ENCODE measurements at regions of chr1 and their contacts with region 1.

Region 1: GRCh38 chr1:48552420-48552819 is 80.4 kb upstream of the SPATA6 start:
- DNase-seq: peak in 1 of 2 donors; percentile 19
- ATAC-seq: peak; percentile 74
- H3K4me3 ChIP-seq: no peak overlapping the region
- H3K27ac ChIP-seq: peak overlapping the region in 2 of 4 donors; percentile 63 to 64
- H3K4me1 ChIP-seq: peaks cover 11 to 13% of the 10 kb centered on the region in 2 donors
- H3K27me3 ChIP-seq: no peaks in the 10 kb centered on the region
- CTCF ChIP-seq: peak; percentile 23 to 56 (median 43)
- POLR2A ChIP-seq: no peak

Region 2: GRCh38 chr1:48498096-48498791 is 54.2 kb before region 1 on chr1:
- in situ Hi-C with region 1: no loop called
- intact Hi-C with region 1: no loop called
- DNase-seq: peak; percentile 53 to 59
- ATAC-seq: peak; percentile 73 to 91
- H3K4me3 ChIP-seq: no peak overlapping the region
- H3K27ac ChIP-seq: no peak overlapping the region
- H3K4me1 ChIP-seq: no peaks in the 10 kb centered on the region
- H3K27me3 ChIP-seq: no peaks in the 10 kb centered on the region
- CTCF ChIP-seq: peak; percentile 57 to 91 (median 77)
- POLR2A ChIP-seq: no peak

Region 3: DNA sequence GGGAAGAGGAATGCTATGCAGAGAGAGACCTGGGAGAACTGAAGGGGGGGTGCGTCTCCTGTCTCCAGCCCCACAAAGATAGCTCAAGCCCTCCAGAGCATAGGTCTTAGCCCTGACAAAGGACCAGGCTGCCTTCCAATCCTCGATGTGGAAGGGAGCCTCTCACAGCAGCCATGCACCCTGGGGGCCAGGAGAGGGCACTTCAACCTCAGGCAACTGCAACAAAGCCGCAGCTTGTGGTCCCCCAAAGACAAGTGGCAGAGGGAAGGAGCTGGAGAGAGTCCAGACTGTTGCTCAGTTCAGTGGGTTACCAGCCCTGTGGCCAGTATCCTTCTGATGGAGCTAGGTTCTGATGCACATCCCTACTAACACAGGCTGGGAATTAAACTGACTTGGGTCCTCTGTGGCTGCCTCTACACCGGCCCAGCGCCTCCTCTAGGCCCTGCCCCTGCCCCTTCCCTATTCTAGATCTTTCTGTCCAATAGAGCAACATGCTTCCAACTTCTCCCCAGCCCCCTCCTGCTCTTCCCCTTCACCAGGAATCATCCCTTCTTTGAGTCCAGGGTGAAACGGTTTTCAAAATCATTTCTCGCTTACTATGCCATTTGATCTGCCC is 20.3 kb after region 1 on chr1:
- in situ Hi-C with region 1: no loop called
- intact Hi-C with region 1: loop called (anchors 1 kb)
- DNase-seq: peak in 1 of 2 donors; percentile 16
- ATAC-seq: peak; percentile 36 to 42
- H3K4me3 ChIP-seq: no peak overlapping the region
- H3K27ac ChIP-seq: no peak overlapping the region
- H3K4me1 ChIP-seq: no peaks in the 10 kb centered on the region
- H3K27me3 ChIP-seq: no peaks in the 10 kb centered on the region
- CTCF ChIP-seq: peak; percentile 21 to 70 (median 41)
- POLR2A ChIP-seq: no peak

Region 4: GRCh38 chr1:48677306-48678287 is 125.2 kb after region 1 on chr1:
- in situ Hi-C with region 1: loop called in 1 of 4 experiments (anchors 10 kb)
- intact Hi-C with region 1: loop called (anchors 5 kb)
- DNase-seq: peak; percentile 21 to 31
- ATAC-seq: peak; percentile 60
- H3K4me3 ChIP-seq: no peak overlapping the region
- H3K27ac ChIP-seq: no peak overlapping the region
- H3K4me1 ChIP-seq: peaks cover 0 to 6% of the 10 kb centered on the region in 2 donors
- H3K27me3 ChIP-seq: no peaks in the 10 kb centered on the region
- CTCF ChIP-seq: peak; percentile 4 to 69 (median 62)
- POLR2A ChIP-seq: no peak

Region 5: GRCh38 chr1:48761986-48762385 is 209.6 kb after region 1 on chr1:
- in situ Hi-C with region 1: no loop called
- intact Hi-C with region 1: no loop called
- DNase-seq: no peak
- ATAC-seq: no peak
- H3K4me3 ChIP-seq: no peak overlapping the region
- H3K27ac ChIP-seq: no peak overlapping the region
- H3K4me1 ChIP-seq: no peaks in the 10 kb centered on the region
- H3K27me3 ChIP-seq: no peaks in the 10 kb centered on the region
- CTCF ChIP-seq: no peak
- POLR2A ChIP-seq: no peak

Region 6: DNA sequence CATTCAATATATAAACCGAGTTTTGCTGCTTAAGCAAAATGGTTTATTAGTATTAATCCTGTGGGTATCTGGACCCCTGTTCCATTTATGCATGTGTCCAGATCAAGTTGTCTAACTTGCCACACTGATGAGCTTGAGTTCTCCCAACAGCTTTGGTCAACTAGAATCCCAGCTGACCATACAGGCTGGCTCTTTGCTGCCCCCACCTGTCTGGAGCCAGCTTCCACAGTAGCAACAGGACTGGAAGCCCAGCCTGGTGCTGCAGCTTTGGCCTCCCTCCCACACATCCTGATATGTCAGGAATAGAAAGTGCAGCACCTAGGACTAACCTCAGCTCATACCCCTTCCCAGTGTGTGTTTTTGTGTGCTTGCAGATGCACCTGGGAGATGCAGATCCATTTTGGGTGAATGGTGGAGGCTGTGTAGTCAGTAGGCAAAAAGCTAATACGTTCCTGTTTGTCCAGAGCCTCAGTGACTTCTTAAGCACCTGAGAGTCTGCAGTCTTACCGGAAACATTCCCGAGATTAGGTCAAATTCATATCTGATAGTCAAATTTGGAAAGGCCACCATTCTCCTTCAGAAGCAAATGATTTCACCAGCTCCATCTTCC is 265.2 kb after region 1 on chr1:
- in situ Hi-C with region 1: no loop called
- intact Hi-C with region 1: loop called (anchors 1 kb)
- DNase-seq: peak in 1 of 2 donors; percentile 11
- ATAC-seq: no peak
- H3K4me3 ChIP-seq: no peak overlapping the region
- H3K27ac ChIP-seq: no peak overlapping the region
- H3K4me1 ChIP-seq: no peaks in the 10 kb centered on the region
- H3K27me3 ChIP-seq: no peaks in the 10 kb centered on the region
- CTCF ChIP-seq: peak in 4 of 5 experiments; percentile 15 to 66 (median 49)
- POLR2A ChIP-seq: no peak

Measured in gastrocnemius medialis (tissue), 4 donors.